B cell (primary cell): ENCODE measurements at regions of chr14 and their contacts with region 1.

Region 1: DNA sequence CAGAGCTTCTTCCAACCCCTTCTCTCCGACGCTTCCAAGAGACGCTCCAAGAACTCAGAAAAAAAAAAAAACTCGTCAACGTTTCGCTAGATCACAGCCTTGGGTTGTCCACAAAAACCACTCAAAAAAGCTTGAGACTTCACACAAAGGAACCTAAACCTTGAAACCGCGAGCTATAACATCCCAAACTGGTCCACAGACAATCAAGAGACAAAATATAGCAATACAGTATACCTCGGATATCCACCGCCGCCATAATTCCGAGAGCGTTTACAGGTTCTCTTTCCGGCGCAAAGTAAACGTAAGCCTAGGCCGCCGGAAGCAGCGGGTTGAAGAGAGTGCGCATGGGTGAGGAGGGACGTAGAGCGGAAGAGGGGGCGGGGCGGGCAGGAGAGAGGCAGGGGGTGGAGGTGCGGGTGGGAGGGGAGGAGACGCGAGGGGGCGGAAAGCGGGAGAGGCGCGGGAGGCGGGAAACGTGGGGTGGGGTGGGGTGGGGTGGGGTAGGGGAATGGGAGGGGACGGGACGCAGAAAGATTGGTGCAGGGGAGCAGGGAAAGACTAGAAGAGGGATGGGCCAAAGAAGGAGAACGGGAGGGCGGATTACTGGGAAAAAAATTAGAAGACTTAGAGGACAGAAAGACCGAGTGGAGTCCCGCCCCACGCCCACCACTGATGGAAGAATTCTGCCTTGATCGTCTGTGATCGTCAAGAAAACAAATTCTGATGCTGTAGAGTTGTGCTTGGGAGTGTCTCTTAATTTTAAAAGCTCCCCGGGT is at the start of gene MED6:
- DNase-seq: peak; percentile 93
- ATAC-seq: peak; percentile 98
- H3K4me3 ChIP-seq: peak within 1 kb of the TSS; percentile 67 to 100 (median 98)
- H3K4me3 Mint-ChIP-seq: peak within 1 kb of the TSS; percentile 99
- H3K27ac ChIP-seq: peak within 1 kb of the TSS; percentile 69 to 94
- H3K27ac Mint-ChIP-seq: peak within 1 kb of the TSS; percentile 97
- H3K4me1 ChIP-seq: peaks cover 25 to 26% of the 10 kb centered on the region in 2 donors
- H3K4me1 Mint-ChIP-seq: peaks cover 27% of the 10 kb centered on the region
- H3K27me3 ChIP-seq: no peaks in the 10 kb centered on the region
- H3K27me3 Mint-ChIP-seq: no peaks in the 10 kb centered on the region
- CTCF ChIP-seq: no peak
- total RNA-seq, gene MED6: 68.3 and 71.0 TPM in 2 replicates

Region 2: GRCh38 chr14:70655110-70655826 is 54.7 kb after region 1 on chr14:
- CTCF ChIA-PET with region 1: interaction called, 4 read pairs
- POLR2A ChIA-PET with region 1: interaction called, 3 read pairs
- intact Hi-C with region 1: loop called (anchors 2 kb)
- DNase-seq: peak; percentile 88
- ATAC-seq: peak; percentile 83
- H3K4me3 ChIP-seq: peak overlapping the region; percentile 6 to 53 (median 21)
- H3K4me3 Mint-ChIP-seq: peak overlapping the region; percentile 91
- H3K27ac ChIP-seq: peak overlapping the region; percentile 91 to 93
- H3K27ac Mint-ChIP-seq: peak overlapping the region; percentile 98
- H3K4me1 ChIP-seq: peaks cover 82 to 85% of the 10 kb centered on the region in 2 donors
- H3K4me1 Mint-ChIP-seq: peaks cover 83% of the 10 kb centered on the region
- H3K27me3 ChIP-seq: no peaks in the 10 kb centered on the region
- H3K27me3 Mint-ChIP-seq: no peaks in the 10 kb centered on the region
- CTCF ChIP-seq: no peak